K562 (cell line): ENCODE measurements at regions of chr19 and their contacts with region 1.

Region 1: DNA sequence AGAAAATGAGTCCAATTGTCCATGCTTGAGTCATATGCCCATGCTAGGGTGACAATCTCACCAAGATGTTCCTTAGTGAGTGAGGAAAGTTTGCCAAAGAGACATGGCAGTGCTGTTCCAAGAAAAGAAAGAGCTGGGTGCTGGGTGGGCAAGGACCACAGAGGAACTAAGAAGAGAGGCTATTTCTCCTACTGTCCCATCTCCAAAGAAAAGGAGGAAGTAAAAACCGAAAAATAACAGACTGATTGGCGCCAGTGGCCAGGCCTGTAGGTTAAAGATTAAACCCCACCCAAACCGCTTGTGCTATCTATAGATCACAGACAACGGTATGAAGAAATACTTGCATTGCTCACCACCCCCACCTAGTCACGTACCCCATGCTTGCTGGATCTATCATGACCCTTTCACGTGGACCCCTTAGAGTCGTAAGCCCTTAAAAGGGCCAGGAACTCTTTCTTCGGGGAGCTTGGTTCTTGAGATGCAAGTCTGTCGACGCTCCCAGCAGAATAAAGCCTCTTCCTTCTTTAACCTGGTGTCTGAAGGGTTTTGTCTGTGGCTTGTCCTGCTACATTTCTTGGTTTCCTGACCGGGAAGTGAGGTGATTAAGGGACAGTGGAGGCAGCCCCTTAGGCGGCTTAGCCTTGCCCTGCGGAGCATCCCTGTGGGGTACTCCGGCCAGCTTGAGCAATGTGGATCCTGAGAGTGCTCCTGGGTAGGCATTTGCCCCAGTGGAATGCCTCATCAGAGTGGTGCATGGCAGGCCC is 606.5 kb downstream of the UQCRFS1 start:
- DNase-seq: peak; percentile 76 to 96 (median 84)
- ATAC-seq: peak; percentile 57
- H3K4me3 ChIP-seq: peak overlapping the region; percentile 86
- H3K27ac ChIP-seq: peak overlapping the region; percentile 99
- H3K4me1 ChIP-seq: peaks cover 22 to 46% of the 10 kb centered on the region in 2 experiments
- H3K27me3 ChIP-seq: no peaks in the 10 kb centered on the region
- CTCF ChIP-seq: no peak
- EP300 ChIP-seq: peak; percentile 100
- POLR2A ChIP-seq: peak; percentile 92
- RAD21 ChIP-seq: peak; percentile 12 to 42; a peak in 3 of 4 replicates

Region 2: DNA sequence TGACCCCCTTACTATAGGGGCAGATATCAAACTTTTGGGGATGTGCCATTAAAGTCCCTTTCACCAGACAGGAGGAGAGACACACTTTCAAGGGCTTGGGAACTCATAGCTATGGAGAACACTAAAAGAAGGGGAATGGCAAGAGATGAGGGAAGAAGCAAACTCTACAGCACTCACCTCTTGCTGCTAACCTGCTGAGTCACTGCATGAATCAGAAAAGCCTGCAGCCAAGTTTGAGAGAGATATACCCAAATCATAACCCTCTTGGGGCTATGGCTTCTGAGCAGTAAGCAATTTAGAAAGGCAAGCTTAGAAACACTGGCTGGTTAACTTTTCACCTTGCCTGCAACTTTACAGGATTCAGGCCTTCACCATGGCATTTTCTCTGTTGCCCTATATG is 421.5 kb before region 1 on chr19:
- CTCF ChIA-PET with region 1: no interaction called
- POLR2A ChIA-PET with region 1: no interaction called
- in situ Hi-C with region 1: no loop called
- intact Hi-C with region 1: no loop called
- DNase-seq: no peak
- ATAC-seq: no peak
- H3K4me3 ChIP-seq: no peak overlapping the region
- H3K27ac ChIP-seq: no peak overlapping the region
- H3K4me1 ChIP-seq: no peaks in the 10 kb centered on the region
- H3K27me3 ChIP-seq: no peaks in the 10 kb centered on the region
- CTCF ChIP-seq: no peak
- EP300 ChIP-seq: no peak
- POLR2A ChIP-seq: no peak
- RAD21 ChIP-seq: no peak

Region 3: GRCh38 chr19:28523619-28524018 is 82.8 kb before region 1 on chr19:
- CTCF ChIA-PET with region 1: no interaction called
- POLR2A ChIA-PET with region 1: interaction called, 13 read pairs
- in situ Hi-C with region 1: no loop called
- intact Hi-C with region 1: no loop called
- DNase-seq: no peak
- ATAC-seq: no peak
- H3K4me3 ChIP-seq: no peak overlapping the region; the same call in 1 of the 2 replicates
- H3K27ac ChIP-seq: peak overlapping the region; percentile 80; the same call in 1 of the 3 replicates
- H3K4me1 ChIP-seq: peaks cover 9 to 42% of the 10 kb centered on the region in 2 experiments
- H3K27me3 ChIP-seq: no peaks in the 10 kb centered on the region
- CTCF ChIP-seq: no peak
- EP300 ChIP-seq: no peak
- POLR2A ChIP-seq: no peak
- RAD21 ChIP-seq: no peak

Region 4: DNA sequence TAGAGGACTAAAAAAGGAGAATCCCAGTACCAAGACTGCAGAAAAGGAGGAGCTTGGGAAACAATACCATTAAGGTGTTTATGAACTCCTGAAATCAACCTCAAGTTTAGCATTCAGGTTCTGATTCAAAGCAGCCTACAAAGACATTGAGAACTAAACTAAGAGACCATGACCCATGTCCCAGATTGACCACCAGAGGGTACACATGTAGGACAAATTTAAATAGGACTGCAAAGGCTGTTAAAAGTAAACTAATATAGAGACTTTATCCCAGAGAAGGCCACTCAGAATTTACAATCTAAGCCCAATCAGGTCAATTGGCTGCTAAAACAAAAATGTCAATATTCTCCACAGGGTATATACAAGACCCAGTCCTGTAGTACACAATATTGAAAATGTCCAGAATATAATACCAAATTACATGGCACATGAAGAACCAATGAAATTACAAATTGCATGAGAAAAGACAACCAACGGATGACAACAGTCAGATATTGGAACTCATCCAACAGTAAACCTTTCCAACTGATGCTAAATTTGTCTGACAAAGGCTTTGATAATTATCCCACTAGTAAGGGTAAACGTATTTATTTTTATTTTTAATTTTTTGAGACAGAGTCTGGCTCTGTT is 75.9 kb before region 1 on chr19:
- CTCF ChIA-PET with region 1: no interaction called
- POLR2A ChIA-PET with region 1: interaction called, 13 read pairs
- in situ Hi-C with region 1: no loop called
- intact Hi-C with region 1: loop called (anchors 2 kb)
- DNase-seq: peak in 1 of 4 experiments; percentile 53
- ATAC-seq: peak; percentile 19
- H3K4me3 ChIP-seq: peak overlapping the region; percentile 42
- H3K27ac ChIP-seq: peak overlapping the region; percentile 72
- H3K4me1 ChIP-seq: peaks cover 10 to 11% of the 10 kb centered on the region in 2 experiments; a peak in 4 of 5 replicates
- H3K27me3 ChIP-seq: no peaks in the 10 kb centered on the region
- CTCF ChIP-seq: peak in 2 of 3 experiments; percentile 39; a peak in 4 of 6 replicates
- EP300 ChIP-seq: no peak
- POLR2A ChIP-seq: no peak
- RAD21 ChIP-seq: peak; percentile 16 to 62; a peak in 2 of 4 replicates

Region 5: GRCh38 chr19:28542394-28543243 is 63.8 kb before region 1 on chr19:
- CTCF ChIA-PET with region 1: no interaction called
- POLR2A ChIA-PET with region 1: interaction called, 81 read pairs
- in situ Hi-C with region 1: loop called (anchors 5 kb)
- intact Hi-C with region 1: loop called (anchors 2 kb)
- DNase-seq: peak in 1 of 4 experiments; percentile 68
- ATAC-seq: peak; percentile 14
- H3K4me3 ChIP-seq: peak overlapping the region; percentile 48
- H3K27ac ChIP-seq: peak overlapping the region; percentile 85
- H3K4me1 ChIP-seq: peaks cover 18 to 19% of the 10 kb centered on the region in 2 experiments
- H3K27me3 ChIP-seq: no peaks in the 10 kb centered on the region
- CTCF ChIP-seq: no peak
- EP300 ChIP-seq: no peak
- POLR2A ChIP-seq: no peak
- RAD21 ChIP-seq: no peak

Region 6: DNA sequence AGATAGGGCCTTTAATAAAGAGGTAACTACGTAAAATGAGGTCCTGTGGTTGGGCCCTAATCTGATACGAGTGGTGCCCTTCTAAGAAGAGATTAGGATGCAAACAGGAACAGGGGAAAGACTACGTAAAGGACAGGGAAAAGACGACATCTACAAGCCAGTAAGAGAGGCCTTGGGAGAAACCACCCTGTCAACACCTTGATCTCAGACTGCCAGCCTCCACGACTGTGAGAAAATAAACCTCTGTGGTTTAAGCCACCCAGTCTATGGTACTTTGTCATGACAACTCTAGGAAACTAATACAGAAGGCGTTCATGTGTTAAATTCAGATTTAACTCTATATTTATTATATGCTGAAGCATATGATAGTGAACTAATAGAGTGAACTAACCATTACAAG is 40.2 kb after region 1 on chr19:
- CTCF ChIA-PET with region 1: no interaction called
- POLR2A ChIA-PET with region 1: no interaction called
- in situ Hi-C with region 1: no loop called
- intact Hi-C with region 1: no loop called
- DNase-seq: no peak
- ATAC-seq: no peak
- H3K4me3 ChIP-seq: no peak overlapping the region
- H3K27ac ChIP-seq: no peak overlapping the region
- H3K4me1 ChIP-seq: 0 out of 5 replicates have a peak, but pooled peaks cover 0 to 2% of the 10 kb centered on the region in 2 experiments
- H3K27me3 ChIP-seq: no peaks in the 10 kb centered on the region
- CTCF ChIP-seq: no peak
- EP300 ChIP-seq: no peak
- POLR2A ChIP-seq: no peak
- RAD21 ChIP-seq: no peak